ENCODE measurements at regions of chr14 and their contacts with region 1.

Region 1: DNA sequence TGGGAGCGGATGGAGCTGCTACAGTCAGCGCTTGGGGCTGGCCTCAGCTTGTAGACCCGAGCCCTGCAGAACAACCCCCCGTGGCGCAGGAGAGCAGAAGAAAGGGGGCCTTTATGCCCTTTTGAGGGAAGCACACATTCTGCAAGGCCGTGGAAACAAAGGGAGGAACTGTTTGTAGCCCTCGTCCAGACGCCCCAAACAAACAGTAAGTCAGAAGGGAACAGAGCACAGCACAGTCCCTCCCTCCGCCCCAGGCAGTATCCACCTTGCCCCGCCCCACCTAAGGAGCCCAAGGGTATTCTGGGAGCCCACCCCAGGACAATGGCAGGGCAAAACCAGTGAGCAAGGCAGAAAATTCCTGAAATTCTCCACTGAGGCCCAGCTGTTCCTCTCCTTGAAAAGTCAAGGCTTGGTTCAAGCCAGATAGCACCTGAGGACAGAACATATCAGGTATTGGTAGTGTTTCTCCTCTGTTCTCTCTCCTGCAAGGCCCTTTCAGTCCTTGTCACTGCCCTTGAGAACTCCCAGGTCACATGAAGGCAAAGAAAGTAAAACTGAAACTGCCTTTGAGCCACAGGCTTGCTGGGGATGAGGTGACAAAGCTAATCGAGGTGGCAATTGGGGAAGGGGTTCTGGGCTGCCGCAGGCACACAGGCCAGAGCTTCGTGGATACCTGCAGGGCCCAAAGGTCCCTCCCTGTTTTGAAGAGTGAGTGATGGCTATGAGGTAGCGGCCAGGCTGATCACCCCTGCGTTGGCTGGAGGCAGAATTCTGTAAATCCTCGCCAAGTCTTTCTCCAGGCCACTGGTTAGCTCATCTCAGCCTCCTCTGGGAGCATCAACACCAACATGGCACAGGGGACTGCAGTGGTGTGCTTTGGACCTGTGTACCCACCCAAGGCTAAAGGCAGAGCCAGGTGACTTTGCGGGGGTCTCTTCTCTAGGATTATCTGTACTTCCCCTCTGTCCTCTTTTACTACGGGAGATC is 499 bp downstream of the DGLUCY start:
- DNase-seq: peak; percentile 33
- ATAC-seq: peak; percentile 88
- H3K4me3 ChIP-seq: peak overlapping the region; percentile 55 to 73
- H3K27ac ChIP-seq: peak overlapping the region; percentile 89
- H3K4me1 ChIP-seq: peaks cover 16% of the 10 kb centered on the region
- H3K27me3 ChIP-seq: no peaks in the 10 kb centered on the region
- CTCF ChIP-seq: no peak

Region 2: GRCh38 chr14:89947344-89947743 is 1167.0 kb before region 1 on chr14:
- CTCF ChIA-PET with region 1: no interaction called
- POLR2A ChIA-PET with region 1: interaction called, 13 read pairs
- in situ Hi-C with region 1: no loop called
- intact Hi-C with region 1: no loop called
- DNase-seq: no peak
- ATAC-seq: no peak
- H3K4me3 ChIP-seq: no peak overlapping the region
- H3K27ac ChIP-seq: no peak overlapping the region
- H3K4me1 ChIP-seq: no peaks in the 10 kb centered on the region
- H3K27me3 ChIP-seq: no peaks in the 10 kb centered on the region
- CTCF ChIP-seq: no peak

Measured in Panc1 (cell line).